PC-9 (cell line): ENCODE measurements at regions of chr18 and their contacts with region 1.

Region 1: GRCh38 chr18:22913857-22914256 is 19.3 kb upstream of the RBBP8 start:
- DNase-seq: peak; percentile 77 to 93
- H3K4me3 ChIP-seq: peak overlapping the region; percentile 22; the same call in 1 of the 2 replicates
- H3K27ac ChIP-seq: peak overlapping the region; percentile 93
- H3K4me1 ChIP-seq: peaks cover 40% of the 10 kb centered on the region
- H3K27me3 ChIP-seq: no peaks in the 10 kb centered on the region
- CTCF ChIP-seq: no peak

Region 2: GRCh38 chr18:22846088-22846683 is 67.7 kb before region 1 on chr18:
- CTCF ChIA-PET with region 1: interaction called, 3 read pairs
- POLR2A ChIA-PET with region 1: no interaction called
- intact Hi-C with region 1: loop called (anchors 1 kb)
- DNase-seq: no peak
- H3K4me3 ChIP-seq: no peak overlapping the region
- H3K27ac ChIP-seq: no peak overlapping the region
- H3K4me1 ChIP-seq: peaks cover 44% of the 10 kb centered on the region
- H3K27me3 ChIP-seq: no peaks in the 10 kb centered on the region
- CTCF ChIP-seq: peak; percentile 39; the same call in 1 of the 2 replicates

Region 3: DNA sequence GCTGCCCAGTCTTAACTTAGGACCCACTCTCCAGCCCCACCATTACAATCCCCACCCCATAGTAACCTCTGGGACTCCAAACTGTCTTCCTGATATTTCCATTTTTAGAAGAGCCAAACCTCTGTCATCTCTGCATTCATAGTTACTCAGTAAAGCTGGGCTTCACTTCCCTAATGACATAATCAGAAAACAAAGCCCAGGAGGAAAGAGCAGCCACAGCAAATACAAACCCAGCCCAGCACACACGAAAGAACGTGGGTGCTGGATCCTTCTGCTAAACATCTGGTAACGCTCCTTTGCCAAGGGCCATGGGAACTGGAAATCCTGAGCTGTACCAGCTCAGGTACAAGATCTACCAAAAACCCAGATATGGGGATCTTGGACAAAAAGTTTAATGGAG is 502.4 kb after region 1 on chr18:
- CTCF ChIA-PET with region 1: no interaction called
- POLR2A ChIA-PET with region 1: no interaction called
- intact Hi-C with region 1: no loop called
- DNase-seq: no peak
- H3K4me3 ChIP-seq: no peak overlapping the region
- H3K27ac ChIP-seq: no peak overlapping the region
- H3K4me1 ChIP-seq: peaks cover 6% of the 10 kb centered on the region
- H3K27me3 ChIP-seq: no peaks in the 10 kb centered on the region
- CTCF ChIP-seq: no peak